Activated T-helper 1 cell treated with anti-CD3 and anti-CD28 coated beads, Interleukin-12 subunit alpha, Interleukin-12 subunit beta, Interleukin-2, Interleukin-4 antibody, amounts not matched to agents 30 ng/mL and 10 ng/mL and 1 ng/mL, durations not matched to agents 14 hours and 24 hours and 36 hours (primary cell): ENCODE measurements at regions of chr3 and their contacts with region 1.

Region 1: GRCh38 chr3:177109688-177110330 is 87.5 kb downstream of the TBL1XR1 start:
- DNase-seq: no peak
- H3K4me3 Mint-ChIP-seq: no peak overlapping the region
- H3K27ac Mint-ChIP-seq: peak overlapping the region; percentile 64
- H3K4me1 Mint-ChIP-seq: peaks cover 60% of the 10 kb centered on the region
- H3K27me3 Mint-ChIP-seq: no peaks in the 10 kb centered on the region

Region 2: DNA sequence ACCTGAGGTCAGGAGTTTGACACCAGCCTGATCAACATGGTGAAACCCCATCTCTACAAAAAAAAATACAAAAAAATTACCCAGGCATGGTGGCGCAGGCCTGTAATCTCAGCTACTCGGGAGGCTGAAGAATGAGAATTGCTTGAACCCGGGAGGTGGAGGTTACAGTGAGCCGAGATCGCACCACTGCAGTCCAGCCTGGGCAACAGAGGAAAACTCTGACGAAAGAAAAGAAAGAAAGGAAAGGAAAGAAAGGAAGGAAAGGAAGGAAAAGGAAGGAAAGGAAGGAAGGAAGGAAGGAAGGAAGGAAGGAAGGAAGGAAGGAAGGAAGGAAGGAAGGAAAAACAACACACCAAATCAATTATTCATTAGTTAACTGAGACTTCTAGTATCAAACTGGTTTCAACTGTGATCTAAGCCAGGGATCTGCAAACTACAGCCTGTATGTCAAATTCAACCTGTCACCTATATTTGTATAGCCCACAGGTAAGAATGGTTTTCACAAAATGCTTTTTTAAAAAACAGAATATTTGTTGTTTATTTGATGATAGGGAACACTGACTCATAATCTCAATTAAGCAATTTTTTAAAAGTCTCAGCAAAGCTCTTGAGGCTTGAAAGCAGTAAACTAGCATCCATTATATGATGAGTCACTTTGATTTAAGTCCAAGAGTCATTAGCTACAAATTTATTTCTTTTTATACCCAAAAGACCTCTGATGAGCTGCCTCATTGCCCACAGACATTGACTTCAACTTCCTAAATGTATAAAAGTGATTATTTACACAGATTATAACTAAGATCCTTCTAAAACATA is 40.1 kb before region 1 on chr3:
- intact Hi-C with region 1: loop called (anchors 5 kb)
- DNase-seq: no peak
- H3K4me3 Mint-ChIP-seq: no peak overlapping the region
- H3K27ac Mint-ChIP-seq: peak overlapping the region; percentile 65
- H3K4me1 Mint-ChIP-seq: peaks cover 26% of the 10 kb centered on the region
- H3K27me3 Mint-ChIP-seq: no peaks in the 10 kb centered on the region

Region 3: GRCh38 chr3:177144923-177145780 is 35.3 kb after region 1 on chr3:
- intact Hi-C with region 1: loop called (anchors 2 kb)
- DNase-seq: peak; percentile 35
- H3K4me3 Mint-ChIP-seq: peak overlapping the region; percentile 61
- H3K27ac Mint-ChIP-seq: peak overlapping the region; percentile 93
- H3K4me1 Mint-ChIP-seq: peaks cover 69% of the 10 kb centered on the region
- H3K27me3 Mint-ChIP-seq: no peaks in the 10 kb centered on the region

Region 4: GRCh38 chr3:177652556-177653291 is 542.9 kb after region 1 on chr3:
- intact Hi-C with region 1: no loop called
- DNase-seq: no peak
- H3K4me3 Mint-ChIP-seq: no peak overlapping the region
- H3K27ac Mint-ChIP-seq: no peak overlapping the region
- H3K4me1 Mint-ChIP-seq: peaks cover 10% of the 10 kb centered on the region
- H3K27me3 Mint-ChIP-seq: no peaks in the 10 kb centered on the region